Heart left ventricle (tissue), 16 donors: ENCODE measurements at regions of chr11 and their contacts with region 1.

Region 1: GRCh38 chr11:11265994-11266606 is 87.0 kb downstream of the CSNK2A3 start:
- DNase-seq: peak in 1 of 5 donors; percentile 37
- ATAC-seq: peak in 3 of 4 donors; percentile 58 to 73 (median 66)
- H3K4me3 ChIP-seq: no peak overlapping the region
- H3K27ac ChIP-seq: no peak overlapping the region
- H3K4me1 ChIP-seq: peaks cover 0 to 13% (median 6%) of the 10 kb centered on the region in 12 donors
- H3K27me3 ChIP-seq: no peaks in the 10 kb centered on the region
- CTCF ChIP-seq: peak; percentile 62 to 87 (median 78)
- POLR2A ChIP-seq: no peak

Region 2: DNA sequence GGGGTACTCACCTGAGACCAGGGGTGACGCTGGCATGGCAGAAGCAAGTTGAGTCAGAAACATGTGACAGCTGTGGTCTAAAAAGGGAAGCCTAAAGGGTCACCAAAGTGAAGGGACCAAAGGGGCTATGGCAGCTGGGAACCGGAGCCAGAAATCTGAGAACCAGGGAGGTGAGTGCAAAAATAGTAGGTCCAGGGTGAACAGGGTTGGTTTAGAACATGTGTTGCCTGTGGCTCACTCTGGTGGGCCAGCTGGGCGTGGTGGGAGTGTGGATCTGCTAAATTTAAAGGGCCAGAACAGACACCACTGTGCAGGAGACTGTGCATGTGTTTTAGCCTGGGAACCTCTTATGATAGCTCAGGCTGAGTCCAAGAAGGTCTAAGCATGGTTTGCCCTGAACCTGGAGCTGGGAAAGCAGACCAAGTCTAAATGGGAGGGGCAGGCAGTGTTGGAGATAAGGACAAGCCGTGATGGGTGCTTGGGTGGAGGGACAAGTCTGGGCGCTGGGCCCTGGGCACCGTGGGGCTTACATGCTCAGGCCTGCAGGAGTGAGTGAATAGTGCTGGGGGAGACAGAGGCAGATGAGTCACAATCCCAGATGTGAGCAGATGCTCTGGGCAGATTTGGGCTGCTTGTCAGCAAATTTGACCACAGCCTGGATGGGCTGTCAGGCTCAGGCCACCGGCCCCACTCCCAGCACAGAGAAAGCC is 366.8 kb before region 1 on chr11:
- intact Hi-C with region 1: no loop called
- DNase-seq: peak; percentile 45 to 81 (median 75)
- ATAC-seq: peak; percentile 21 to 77 (median 68)
- H3K4me3 ChIP-seq: peak overlapping the region in 1 of 12 donors; percentile 4
- H3K27ac ChIP-seq: peak overlapping the region; percentile 51 to 98 (median 90)
- H3K4me1 ChIP-seq: peaks cover 10 to 55% (median 33%) of the 10 kb centered on the region in 12 donors
- H3K27me3 ChIP-seq: no peaks in the 10 kb centered on the region
- CTCF ChIP-seq: no peak
- POLR2A ChIP-seq: no peak

Region 3: GRCh38 chr11:11044137-11044855 is 221.8 kb before region 1 on chr11:
- intact Hi-C with region 1: loop called in 9 of 10 experiments (anchors 5 to 10 kb)
- DNase-seq: no peak
- ATAC-seq: peak in 1 of 4 donors; percentile 27
- H3K4me3 ChIP-seq: no peak overlapping the region
- H3K27ac ChIP-seq: no peak overlapping the region
- H3K4me1 ChIP-seq: no peaks in the 10 kb centered on the region
- H3K27me3 ChIP-seq: no peaks in the 10 kb centered on the region
- CTCF ChIP-seq: no peak
- POLR2A ChIP-seq: no peak

Region 4: DNA sequence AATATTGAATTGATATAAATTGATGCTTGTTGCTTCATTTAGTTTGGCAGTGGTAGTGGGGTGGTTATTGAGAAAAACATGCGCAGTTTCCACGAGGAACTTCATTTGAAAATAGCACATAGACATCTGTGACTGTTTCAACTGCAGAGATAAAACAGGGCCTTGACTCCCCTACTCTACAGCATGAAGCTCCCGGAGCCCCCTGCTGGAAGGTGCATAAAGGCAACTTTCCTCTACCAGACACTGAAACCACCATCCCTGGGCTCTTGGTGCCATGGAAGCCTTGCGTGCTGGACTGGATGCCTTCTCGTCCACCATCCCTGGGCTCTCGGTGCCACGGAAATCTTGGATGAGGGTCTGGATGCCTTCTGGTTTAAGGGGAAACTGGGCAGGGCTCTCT is 108.9 kb before region 1 on chr11:
- intact Hi-C with region 1: loop called in 1 of 10 experiments (anchors 10 kb)
- DNase-seq: peak in 1 of 5 donors; percentile 43
- ATAC-seq: peak in 1 of 4 donors; percentile 60
- H3K4me3 ChIP-seq: no peak overlapping the region
- H3K27ac ChIP-seq: no peak overlapping the region
- H3K4me1 ChIP-seq: peaks cover 0 to 7% (median 0%) of the 10 kb centered on the region in 12 donors
- H3K27me3 ChIP-seq: no peaks in the 10 kb centered on the region
- CTCF ChIP-seq: peak in 9 of 12 donors; percentile 25 to 51 (median 35)
- POLR2A ChIP-seq: no peak